Sigmoid colon (tissue), 7 donors: ENCODE measurements at regions of chr16 and their contacts with region 1.

Region 1: DNA sequence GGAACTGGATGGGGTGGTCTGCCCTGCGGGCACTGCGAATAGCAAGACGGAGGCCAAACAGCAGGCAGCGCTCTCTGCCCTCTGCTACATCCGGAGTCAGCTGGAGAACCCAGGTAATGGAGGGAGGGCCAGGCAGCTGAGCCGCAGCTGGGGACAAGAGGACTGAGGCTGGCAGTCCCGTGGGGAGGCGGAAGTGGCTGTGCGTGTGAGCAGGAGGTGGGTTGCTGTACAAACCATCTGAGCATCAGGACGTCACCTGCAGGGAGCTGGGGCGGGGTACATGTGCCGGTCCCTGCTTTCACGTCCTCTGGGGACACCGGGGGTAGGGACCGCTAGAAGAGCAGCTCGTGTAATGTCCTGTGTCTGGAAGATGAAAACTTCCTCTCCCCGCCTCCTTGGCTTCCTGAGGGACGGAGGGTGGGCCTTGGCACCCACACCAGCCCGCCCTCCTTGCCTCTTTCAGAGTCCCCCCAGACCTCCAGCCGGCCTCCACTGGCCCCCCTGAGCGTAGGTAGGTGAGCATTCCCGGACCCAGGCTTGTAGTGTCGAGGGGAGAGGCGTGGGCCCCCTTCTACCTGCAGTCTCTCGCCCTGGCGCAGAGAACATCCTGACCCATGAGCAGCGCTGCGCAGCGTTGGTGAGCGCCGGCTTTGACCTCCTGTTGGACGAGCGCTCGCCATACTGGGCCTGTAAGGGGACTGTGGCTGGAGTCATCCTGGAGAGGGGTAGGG is 3.7 kb downstream of the ADAD2 start:
- DNase-seq: no peak
- H3K4me3 ChIP-seq: no peak overlapping the region
- H3K27ac ChIP-seq: no peak overlapping the region
- H3K4me1 ChIP-seq: no peaks in the 10 kb centered on the region
- H3K27me3 ChIP-seq: peaks cover 0 to 12% (median 0%) of the 10 kb centered on the region in 3 donors
- CTCF ChIP-seq: no peak
- EP300 ChIP-seq: no peak
- POLR2A ChIP-seq: no peak

Region 2: GRCh38 chr16:83967806-83968305 is 226.8 kb before region 1 on chr16 and contains the start of gene NECAB2:
- intact Hi-C with region 1: loop called (anchors 5 kb)
- DNase-seq: no peak
- H3K4me3 ChIP-seq: peak within 1 kb of the TSS in 3 of 4 donors; percentile 32 to 51 (median 48)
- H3K27ac ChIP-seq: no peak within 1 kb of the TSS
- H3K4me1 ChIP-seq: peaks cover 0 to 10% (median 4%) of the 10 kb centered on the region in 4 donors
- H3K27me3 ChIP-seq: peaks cover 8 to 18% (median 13%) of the 10 kb centered on the region in 3 donors
- CTCF ChIP-seq: peak in 1 of 4 experiments; percentile 61
- EP300 ChIP-seq: no peak
- POLR2A ChIP-seq: no peak
- total RNA-seq, gene NECAB2: 1.8 to 3.1 TPM in 2 of 4 donors, not detected in the others